Activated CD4-positive, alpha-beta T cell treated with anti-CD3 and anti-CD28 coated beads, Interleukin-2, amount 10 ng/mL, durations not matched to agents 24 days and 14 days (primary cell): ENCODE measurements at regions of chr5 and their contacts with region 1.

Region 1: GRCh38 chr5:67209142-67209771 is 12.7 kb upstream of the CD180 start:
- DNase-seq: peak; percentile 92
- H3K4me3 Mint-ChIP-seq: no peak overlapping the region
- H3K27ac Mint-ChIP-seq: peak overlapping the region; percentile 74
- H3K4me1 Mint-ChIP-seq: peaks cover 62% of the 10 kb centered on the region
- H3K27me3 Mint-ChIP-seq: no peaks in the 10 kb centered on the region

Region 2: GRCh38 chr5:66171349-66172344 is 1037.6 kb before region 1 on chr5:
- intact Hi-C with region 1: loop called (anchors 10 kb)
- DNase-seq: peak; percentile 84
- H3K4me3 Mint-ChIP-seq: no peak overlapping the region
- H3K27ac Mint-ChIP-seq: no peak overlapping the region
- H3K4me1 Mint-ChIP-seq: peaks cover 13% of the 10 kb centered on the region
- H3K27me3 Mint-ChIP-seq: no peaks in the 10 kb centered on the region

Region 3: GRCh38 chr5:66553916-66554575 is 655.2 kb before region 1 on chr5:
- intact Hi-C with region 1: loop called (anchors 10 kb)
- DNase-seq: peak; percentile 80
- H3K4me3 Mint-ChIP-seq: no peak overlapping the region
- H3K27ac Mint-ChIP-seq: peak overlapping the region; percentile 27
- H3K4me1 Mint-ChIP-seq: peaks cover 29% of the 10 kb centered on the region
- H3K27me3 Mint-ChIP-seq: no peaks in the 10 kb centered on the region

Region 4: DNA sequence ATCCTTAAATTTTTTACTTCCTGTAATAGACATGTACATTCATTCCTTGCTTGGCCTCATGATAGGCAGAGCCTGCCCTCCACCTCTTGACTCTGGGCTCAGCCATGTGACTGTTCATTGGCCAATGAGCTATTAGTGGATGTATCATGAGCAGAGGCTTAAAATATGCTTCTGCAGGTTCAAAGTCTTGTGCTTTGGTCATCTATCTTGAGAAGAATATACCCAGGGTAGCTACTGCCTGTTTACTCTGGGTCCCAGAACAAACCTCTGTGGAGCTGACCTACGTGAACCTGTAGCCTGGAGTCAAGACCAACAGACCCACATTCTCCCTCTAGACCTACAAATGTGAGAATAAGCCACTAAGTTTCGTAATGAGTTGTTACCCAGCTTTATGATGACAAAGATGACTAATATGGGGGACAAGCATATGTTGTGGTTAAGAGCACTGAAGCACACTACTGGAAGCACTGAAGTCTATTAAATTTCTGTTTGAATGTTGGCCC is 368.7 kb before region 1 on chr5:
- intact Hi-C with region 1: loop called (anchors 5 kb)
- DNase-seq: peak; percentile 85
- H3K4me3 Mint-ChIP-seq: peak overlapping the region; percentile 57
- H3K27ac Mint-ChIP-seq: peak overlapping the region; percentile 94
- H3K4me1 Mint-ChIP-seq: peaks cover 56% of the 10 kb centered on the region
- H3K27me3 Mint-ChIP-seq: no peaks in the 10 kb centered on the region

Region 5: GRCh38 chr5:67003935-67004729 is 205.1 kb before region 1 on chr5:
- intact Hi-C with region 1: loop called (anchors 2 kb)
- DNase-seq: peak; percentile 96
- H3K4me3 Mint-ChIP-seq: peak overlapping the region; percentile 96
- H3K27ac Mint-ChIP-seq: peak overlapping the region; percentile 97
- H3K4me1 Mint-ChIP-seq: peaks cover 56% of the 10 kb centered on the region
- H3K27me3 Mint-ChIP-seq: no peaks in the 10 kb centered on the region

Region 6: DNA sequence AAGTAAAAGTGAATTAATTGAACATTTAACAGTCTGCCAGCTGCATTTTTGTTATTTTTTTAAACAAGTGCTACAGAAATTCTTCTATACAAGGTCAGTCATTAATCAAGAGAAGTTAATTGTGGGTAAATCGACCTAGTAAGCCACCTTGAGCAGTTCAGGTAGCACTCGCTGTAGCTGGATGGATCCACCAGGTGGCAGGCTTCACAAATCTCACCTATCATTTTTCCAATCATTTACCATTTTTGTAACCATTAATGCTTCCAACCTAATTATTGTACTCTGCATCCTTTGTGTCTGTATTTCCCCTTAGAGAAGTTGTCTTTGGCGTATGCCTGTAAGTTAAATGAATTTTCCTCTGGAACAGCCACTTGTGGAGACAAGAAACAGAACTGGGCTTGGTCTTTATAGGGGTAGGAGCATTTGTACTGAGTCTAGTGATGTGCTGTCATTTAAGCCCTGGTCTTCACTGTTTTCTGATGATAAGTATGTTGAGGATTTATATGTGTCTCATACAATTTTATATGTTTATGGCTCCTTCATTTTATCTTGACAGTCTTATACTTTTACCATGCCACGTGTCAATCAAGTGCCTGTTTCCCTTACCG is 52.2 kb before region 1 on chr5:
- intact Hi-C with region 1: loop called (anchors 1 kb)
- DNase-seq: peak; percentile 84
- H3K4me3 Mint-ChIP-seq: no peak overlapping the region
- H3K27ac Mint-ChIP-seq: peak overlapping the region; percentile 35
- H3K4me1 Mint-ChIP-seq: peaks cover 47% of the 10 kb centered on the region
- H3K27me3 Mint-ChIP-seq: no peaks in the 10 kb centered on the region

Region 7: DNA sequence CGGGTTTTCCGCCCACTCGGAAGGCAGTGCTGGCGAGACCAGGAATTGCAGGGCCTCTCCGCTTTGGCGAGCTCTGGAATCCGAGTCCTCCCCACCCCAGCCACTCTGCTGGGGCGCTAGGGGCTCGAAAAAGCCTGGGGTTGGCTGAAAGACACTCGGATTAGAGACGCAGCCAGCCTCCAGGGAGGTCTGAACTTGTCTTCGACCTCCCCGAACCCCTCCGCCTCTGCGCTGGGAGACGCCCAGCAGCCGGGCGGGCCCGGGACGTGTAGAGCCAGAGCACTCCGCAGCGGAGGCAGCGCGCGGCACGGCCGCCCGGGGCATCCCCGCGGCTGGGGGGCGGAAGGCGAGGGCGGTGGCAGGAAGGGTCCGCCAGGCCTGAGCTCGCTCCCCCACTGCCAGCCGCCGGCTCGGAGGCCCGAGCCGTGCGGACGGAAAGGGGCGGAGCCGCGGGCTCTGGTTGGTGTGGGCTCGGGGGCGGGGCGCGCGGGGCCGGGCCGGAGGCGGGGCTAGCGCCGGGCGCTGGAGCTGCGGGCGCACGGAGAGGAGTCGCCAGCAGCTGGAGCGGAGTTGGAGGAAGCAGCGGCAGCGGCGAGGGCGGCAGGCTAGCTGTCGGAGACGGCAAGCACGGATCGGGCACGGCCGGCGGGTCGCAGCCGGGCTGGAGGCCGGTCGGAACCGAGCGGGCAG is 1006.1 kb after region 1 on chr5 and contains the start of gene PIK3R1:
- intact Hi-C with region 1: loop called (anchors 2 kb)
- DNase-seq: peak; percentile 97
- H3K4me3 Mint-ChIP-seq: peak within 1 kb of the TSS; percentile 89
- H3K27ac Mint-ChIP-seq: peak within 1 kb of the TSS; percentile 95
- H3K4me1 Mint-ChIP-seq: peaks cover 34% of the 10 kb centered on the region
- H3K27me3 Mint-ChIP-seq: no peaks in the 10 kb centered on the region
- total RNA-seq, gene PIK3R1: 35.2 and 38.6 TPM in 2 replicates